ENCODE measurements at regions of chr10 and their contacts with region 1.

Region 1: GRCh38 chr10:14837757-14838581 is at the starts of genes CDNF, HSPA14 and MSANTD7:
- DNase-seq: peak; percentile 100
- H3K4me3 ChIP-seq: peak within 1 kb of the TSS; percentile 47 to 81 (median 71)
- H3K27ac ChIP-seq: peak within 1 kb of the TSS; percentile 74
- H3K4me1 ChIP-seq: peaks cover 11% of the 10 kb centered on the region
- H3K27me3 ChIP-seq: no peaks in the 10 kb centered on the region
- CTCF ChIP-seq: no peak
- POLR2A ChIP-seq: peak; percentile 92
- total RNA-seq, gene CDNF: 0.58 and 0.99 TPM in 2 replicates
- total RNA-seq, gene HSPA14: 15.7 and 18.0 TPM in 2 replicates
- total RNA-seq, gene MSANTD7: 13.1 and 13.6 TPM in 2 replicates

Region 2: GRCh38 chr10:14500172-14500765 is 337.7 kb before region 1 on chr10:
- CTCF ChIA-PET with region 1: interaction called, 10 read pairs
- POLR2A ChIA-PET with region 1: interaction called, 3 read pairs
- dilution Hi-C with region 1: no loop called
- intact Hi-C with region 1: loop called (anchors 1 kb)
- DNase-seq: no peak
- H3K4me3 ChIP-seq: no peak overlapping the region
- H3K27ac ChIP-seq: no peak overlapping the region
- H3K4me1 ChIP-seq: no peaks in the 10 kb centered on the region
- H3K27me3 ChIP-seq: no peaks in the 10 kb centered on the region
- CTCF ChIP-seq: no peak
- POLR2A ChIP-seq: no peak

Region 3: GRCh38 chr10:14536241-14537213 is 301.4 kb before region 1 on chr10:
- CTCF ChIA-PET with region 1: interaction called, 23 read pairs
- POLR2A ChIA-PET with region 1: no interaction called
- dilution Hi-C with region 1: no loop called
- intact Hi-C with region 1: loop called (anchors 5 kb)
- DNase-seq: peak; percentile 65
- H3K4me3 ChIP-seq: no peak overlapping the region
- H3K27ac ChIP-seq: no peak overlapping the region
- H3K4me1 ChIP-seq: no peaks in the 10 kb centered on the region
- H3K27me3 ChIP-seq: no peaks in the 10 kb centered on the region
- CTCF ChIP-seq: peak; percentile 55 to 59
- POLR2A ChIP-seq: no peak

Region 4: GRCh38 chr10:14665304-14665703 is 172.7 kb before region 1 on chr10:
- CTCF ChIA-PET with region 1: no interaction called
- POLR2A ChIA-PET with region 1: no interaction called
- dilution Hi-C with region 1: no loop called
- intact Hi-C with region 1: no loop called
- DNase-seq: no peak
- H3K4me3 ChIP-seq: no peak overlapping the region
- H3K27ac ChIP-seq: no peak overlapping the region
- H3K4me1 ChIP-seq: no peaks in the 10 kb centered on the region
- H3K27me3 ChIP-seq: peaks cover 0 to 2% of the 10 kb centered on the region in 2 experiments
- CTCF ChIP-seq: no peak
- POLR2A ChIP-seq: no peak

Region 5: GRCh38 chr10:14891151-14891550 is 53.2 kb after region 1 on chr10:
- CTCF ChIA-PET with region 1: no interaction called
- POLR2A ChIA-PET with region 1: no interaction called
- dilution Hi-C with region 1: no loop called
- intact Hi-C with region 1: no loop called
- DNase-seq: no peak
- H3K4me3 ChIP-seq: no peak overlapping the region
- H3K27ac ChIP-seq: no peak overlapping the region
- H3K4me1 ChIP-seq: no peaks in the 10 kb centered on the region
- H3K27me3 ChIP-seq: no peaks in the 10 kb centered on the region
- CTCF ChIP-seq: no peak
- POLR2A ChIP-seq: no peak

Region 6: GRCh38 chr10:14954001-14954770 is 116.2 kb after region 1 on chr10 and contains the start of gene DCLRE1C:
- CTCF ChIA-PET with region 1: no interaction called
- POLR2A ChIA-PET with region 1: interaction called, 6 read pairs
- dilution Hi-C with region 1: no loop called
- intact Hi-C with region 1: loop called (anchors 2 kb)
- DNase-seq: peak; percentile 87
- H3K4me3 ChIP-seq: peak within 1 kb of the TSS; percentile 48 to 73 (median 69)
- H3K27ac ChIP-seq: peak within 1 kb of the TSS; percentile 79
- H3K4me1 ChIP-seq: peaks cover 18% of the 10 kb centered on the region
- H3K27me3 ChIP-seq: no peaks in the 10 kb centered on the region
- CTCF ChIP-seq: no peak
- POLR2A ChIP-seq: peak; percentile 71
- total RNA-seq, gene DCLRE1C: 11.0 and 15.8 TPM in 2 replicates

Region 7: GRCh38 chr10:15131330-15131729 is 293.4 kb after region 1 on chr10:
- CTCF ChIA-PET with region 1: no interaction called
- POLR2A ChIA-PET with region 1: no interaction called
- dilution Hi-C with region 1: no loop called
- intact Hi-C with region 1: no loop called
- DNase-seq: no peak
- H3K4me3 ChIP-seq: no peak overlapping the region
- H3K27ac ChIP-seq: no peak overlapping the region
- H3K4me1 ChIP-seq: no peaks in the 10 kb centered on the region
- H3K27me3 ChIP-seq: no peaks in the 10 kb centered on the region
- CTCF ChIP-seq: no peak
- POLR2A ChIP-seq: no peak